A673 (cell line): ENCODE measurements at regions of chr14 and their contacts with region 1.

Region 1: DNA sequence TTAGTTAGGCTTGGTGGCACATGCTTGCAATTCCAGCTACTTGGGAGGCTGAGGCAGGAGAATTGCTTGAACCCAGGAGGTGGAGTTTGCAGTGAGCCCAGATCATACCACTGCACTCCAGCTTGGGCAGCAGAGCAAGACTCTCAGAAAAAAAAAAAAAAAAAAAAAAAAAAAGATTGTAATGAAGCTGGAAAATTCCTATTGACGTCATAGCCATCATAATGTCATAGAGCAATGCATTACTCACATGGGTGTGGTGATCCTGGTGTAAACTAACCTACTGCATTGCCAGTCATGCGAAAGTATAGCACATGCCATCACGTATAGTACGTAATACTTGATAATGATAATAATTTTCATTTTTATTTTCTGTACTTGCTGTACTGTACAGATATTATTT is 42.7 kb upstream of the NID2 start:
- DNase-seq: no peak
- H3K4me3 ChIP-seq: no peak overlapping the region
- H3K27ac ChIP-seq: no peak overlapping the region
- H3K4me1 ChIP-seq: no peaks in the 10 kb centered on the region
- H3K27me3 ChIP-seq: no peaks in the 10 kb centered on the region
- CTCF ChIP-seq: no peak

Region 2: DNA sequence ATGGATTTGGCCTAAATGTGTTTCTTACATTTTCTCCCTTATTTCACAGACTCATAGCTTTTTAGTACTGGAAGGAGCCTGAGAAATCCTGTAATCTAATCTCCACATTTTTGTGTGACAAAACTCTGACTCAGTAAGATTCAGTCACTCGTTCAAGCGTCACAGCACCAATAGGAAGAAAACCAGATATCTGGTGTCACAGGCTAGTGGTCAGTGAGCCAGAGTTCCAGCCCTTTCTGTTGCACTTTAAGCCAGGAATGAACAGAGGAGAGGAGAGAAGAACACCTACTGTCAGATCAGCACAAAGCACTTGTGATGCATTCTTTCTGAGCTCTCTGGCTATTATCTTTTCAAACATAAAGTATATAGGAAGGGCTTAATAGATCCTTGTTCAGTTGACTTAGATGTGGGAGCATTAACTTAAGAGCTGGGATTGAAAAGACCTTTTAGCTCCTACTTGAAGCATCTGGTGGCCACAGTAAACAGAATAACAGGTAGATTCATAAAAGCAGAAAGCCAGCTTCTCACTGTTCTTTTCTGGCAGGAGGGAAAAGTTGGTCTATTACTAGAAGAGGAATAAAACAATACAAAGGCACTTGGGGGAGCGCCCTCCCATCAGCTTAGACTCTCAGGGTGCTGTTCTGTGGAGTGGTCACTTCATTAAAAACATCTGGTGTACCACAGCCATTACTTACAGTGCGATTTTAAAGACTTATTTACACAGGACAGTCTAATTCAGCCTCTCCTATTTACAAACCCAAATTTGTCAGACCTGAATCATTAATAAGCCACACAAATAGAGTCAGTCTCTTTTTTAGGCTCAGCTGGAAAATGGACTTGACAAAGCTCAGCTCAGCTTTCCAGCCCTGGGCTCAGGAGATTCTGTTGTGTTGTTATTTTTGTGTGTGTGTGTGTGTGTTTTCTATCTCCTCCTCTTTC is 30.5 kb before region 1 on chr14:
- CTCF ChIA-PET with region 1: no interaction called
- POLR2A ChIA-PET with region 1: no interaction called
- intact Hi-C with region 1: no loop called
- DNase-seq: no peak
- H3K4me3 ChIP-seq: no peak overlapping the region
- H3K27ac ChIP-seq: no peak overlapping the region
- H3K4me1 ChIP-seq: no peaks in the 10 kb centered on the region
- H3K27me3 ChIP-seq: no peaks in the 10 kb centered on the region
- CTCF ChIP-seq: no peak

Region 3: DNA sequence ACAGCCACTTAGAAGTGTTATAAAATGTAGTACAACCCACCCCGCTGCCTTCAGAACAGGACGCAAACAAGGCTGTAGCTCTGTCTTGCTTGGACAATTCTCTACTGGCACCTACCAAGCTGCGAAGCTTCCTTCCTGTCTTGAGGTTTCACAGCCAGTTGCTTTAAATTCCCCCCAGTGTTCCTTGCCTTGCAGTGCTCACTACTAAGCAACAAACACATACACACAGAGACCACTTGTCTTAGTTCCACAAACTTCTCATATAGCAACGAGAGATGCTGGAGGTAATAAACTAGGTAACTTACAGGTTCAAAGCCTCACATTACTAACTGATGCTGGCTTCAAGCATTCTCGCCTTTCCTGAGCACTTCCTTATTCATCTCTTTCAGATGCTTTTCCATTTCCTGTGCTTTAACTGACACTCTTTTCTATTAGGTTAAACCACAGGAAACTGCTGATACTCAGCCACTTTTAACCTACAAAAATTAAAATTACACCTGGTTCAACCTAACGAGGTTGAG is 64.5 kb after region 1 on chr14:
- CTCF ChIA-PET with region 1: no interaction called
- POLR2A ChIA-PET with region 1: interaction called, 11 read pairs
- intact Hi-C with region 1: no loop called
- DNase-seq: no peak
- H3K4me3 ChIP-seq: no peak overlapping the region
- H3K27ac ChIP-seq: no peak overlapping the region
- H3K4me1 ChIP-seq: no peaks in the 10 kb centered on the region
- H3K27me3 ChIP-seq: no peaks in the 10 kb centered on the region
- CTCF ChIP-seq: no peak